Upper lobe of right lung (tissue), 1 donor: ENCODE measurements at regions of chr10 and their contacts with region 1.

Region 1: DNA sequence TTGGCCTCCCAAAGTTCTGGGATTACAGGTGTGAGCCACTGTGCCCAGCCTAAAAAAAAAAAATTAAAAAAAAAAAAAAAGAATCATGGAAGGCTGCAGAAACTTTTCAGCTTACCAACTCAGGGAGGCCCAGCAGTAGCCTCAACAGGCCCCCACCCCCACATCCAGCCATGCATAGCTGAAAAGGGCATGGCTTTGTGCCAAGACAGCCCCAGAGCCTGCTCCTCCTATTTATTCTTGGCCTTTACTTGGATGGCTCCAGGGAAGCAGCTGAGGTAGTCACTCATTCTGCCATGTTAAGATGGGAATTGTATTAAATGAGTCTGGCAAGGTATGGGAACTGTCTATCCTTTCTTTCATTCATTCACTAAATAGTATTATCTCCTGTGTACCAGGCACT is 13.7 kb upstream of the CNNM2 start:
- DNase-seq: no peak
- ATAC-seq: no peak
- H3K4me3 ChIP-seq: no peak overlapping the region
- H3K27ac ChIP-seq: no peak overlapping the region
- H3K4me1 ChIP-seq: no peaks in the 10 kb centered on the region
- H3K27me3 ChIP-seq: no peaks in the 10 kb centered on the region
- CTCF ChIP-seq: no peak

Region 2: DNA sequence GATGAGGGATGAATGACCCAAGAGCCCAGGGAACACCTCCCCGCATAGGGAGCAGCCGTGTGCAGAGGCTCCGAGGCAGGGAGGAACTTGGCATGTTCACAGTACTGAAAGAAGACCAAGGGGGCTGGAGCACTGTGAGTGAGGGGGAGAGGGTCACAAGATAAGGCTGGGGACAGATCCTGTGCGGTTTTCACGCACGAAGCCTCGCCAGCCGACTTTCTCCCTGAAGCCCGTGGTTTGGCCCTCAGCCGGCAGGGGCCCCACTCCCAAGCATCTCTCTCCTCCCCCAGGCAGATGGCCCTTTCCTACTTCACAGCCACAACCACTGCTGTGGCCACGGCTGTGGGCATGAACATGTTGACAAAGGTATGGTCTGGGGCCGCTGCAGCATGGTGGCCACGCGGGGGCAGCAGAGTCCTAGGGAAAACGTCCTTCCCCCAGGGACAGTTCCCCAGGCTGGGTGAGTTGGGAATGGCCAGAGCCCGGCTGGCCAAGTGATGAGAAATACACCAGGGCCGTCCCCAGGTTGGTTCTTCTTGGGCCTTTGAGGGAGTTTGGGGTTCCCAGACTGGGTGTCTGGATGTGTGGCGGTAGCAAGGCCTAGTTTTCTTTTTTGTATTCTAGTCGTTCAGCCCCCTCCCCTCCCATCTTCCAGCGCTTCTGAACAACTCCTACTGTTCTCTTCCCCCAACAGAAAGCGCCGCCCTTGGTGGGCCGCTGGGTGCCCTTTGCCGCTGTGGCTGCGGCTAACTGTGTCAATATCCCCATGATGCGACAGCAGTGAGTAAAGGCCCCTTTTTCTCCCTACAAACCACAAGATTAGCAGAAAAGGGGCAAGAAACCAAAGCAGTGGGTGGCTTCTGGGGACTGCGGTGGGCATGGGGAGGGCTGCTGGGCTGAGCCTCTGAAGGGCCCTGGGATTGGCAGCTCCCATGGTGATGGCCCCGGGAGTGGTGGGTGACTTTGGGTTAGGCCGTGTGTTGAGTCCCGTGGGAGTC is 175.0 kb before region 1 on chr10:
- intact Hi-C with region 1: loop called (anchors 5 kb)
- DNase-seq: peak; percentile 93
- ATAC-seq: peak; percentile 96
- H3K4me3 ChIP-seq: no peak overlapping the region
- H3K27ac ChIP-seq: no peak overlapping the region
- H3K4me1 ChIP-seq: peaks cover 10% of the 10 kb centered on the region
- H3K27me3 ChIP-seq: no peaks in the 10 kb centered on the region
- CTCF ChIP-seq: peak; percentile 91

Region 3: DNA sequence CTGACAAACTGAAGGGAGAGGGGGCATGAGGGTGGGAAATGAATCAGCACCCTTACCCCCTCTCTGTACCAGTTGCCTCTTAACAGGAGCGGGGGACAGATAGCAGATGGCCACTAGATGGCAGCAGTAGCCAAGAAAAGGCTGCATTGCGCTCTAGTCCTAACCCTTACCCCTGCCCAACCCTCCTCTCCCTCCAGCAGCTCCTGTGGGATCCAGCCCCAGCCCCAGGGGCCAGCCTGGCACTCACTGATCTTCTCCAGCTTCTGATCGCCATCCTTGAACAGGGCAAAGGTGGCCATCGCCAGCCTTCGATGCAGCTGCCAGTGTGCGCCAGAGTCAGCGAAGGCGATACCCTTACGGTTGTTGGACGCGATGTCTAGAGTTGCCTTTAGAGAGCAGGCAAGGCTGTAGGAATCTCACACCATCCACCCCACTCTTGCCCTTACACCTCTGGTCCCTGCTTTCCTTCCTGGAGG is 69.3 kb before region 1 on chr10:
- intact Hi-C with region 1: loop called (anchors 10 kb)
- DNase-seq: peak; percentile 76
- ATAC-seq: peak; percentile 95
- H3K4me3 ChIP-seq: no peak overlapping the region
- H3K27ac ChIP-seq: no peak overlapping the region
- H3K4me1 ChIP-seq: no peaks in the 10 kb centered on the region
- H3K27me3 ChIP-seq: no peaks in the 10 kb centered on the region
- CTCF ChIP-seq: peak; percentile 91

Region 4: GRCh38 chr10:102951316-102951715 is 47.0 kb after region 1 on chr10:
- intact Hi-C with region 1: no loop called
- DNase-seq: no peak
- ATAC-seq: no peak
- H3K4me3 ChIP-seq: no peak overlapping the region
- H3K27ac ChIP-seq: no peak overlapping the region
- H3K4me1 ChIP-seq: no peaks in the 10 kb centered on the region
- H3K27me3 ChIP-seq: no peaks in the 10 kb centered on the region
- CTCF ChIP-seq: no peak

Region 5: GRCh38 chr10:103080891-103081581 is 176.7 kb after region 1 on chr10:
- intact Hi-C with region 1: no loop called
- DNase-seq: no peak
- ATAC-seq: no peak
- H3K4me3 ChIP-seq: no peak overlapping the region
- H3K27ac ChIP-seq: no peak overlapping the region
- H3K4me1 ChIP-seq: no peaks in the 10 kb centered on the region
- H3K27me3 ChIP-seq: no peaks in the 10 kb centered on the region
- CTCF ChIP-seq: no peak